Activated CD8-positive, alpha-beta memory T cell treated with anti-CD3 and anti-CD28 coated beads, Interleukin-2, amount 10 ng/mL, durations not matched to agents 7 days and 5 days (primary cell): ENCODE measurements at regions of chr22 and their contacts with region 1.

Region 1: GRCh38 chr22:42863349-42863961 is 6.4 kb upstream of the ARFGAP3 start:
- DNase-seq: no peak
- ATAC-seq: peak; percentile 18
- H3K4me3 Mint-ChIP-seq: no peak overlapping the region
- H3K27ac Mint-ChIP-seq: peak overlapping the region; percentile 21
- H3K4me1 Mint-ChIP-seq: peaks cover 9% of the 10 kb centered on the region
- H3K27me3 Mint-ChIP-seq: no peaks in the 10 kb centered on the region

Region 2: GRCh38 chr22:42816336-42816735 is 47.1 kb before region 1 on chr22:
- CTCF ChIA-PET with region 1: interaction called, 10 read pairs
- DNase-seq: no peak
- ATAC-seq: no peak
- H3K4me3 Mint-ChIP-seq: no peak overlapping the region
- H3K27ac Mint-ChIP-seq: no peak overlapping the region
- H3K4me1 Mint-ChIP-seq: no peaks in the 10 kb centered on the region
- H3K27me3 Mint-ChIP-seq: no peaks in the 10 kb centered on the region